Esophagus squamous epithelium (tissue), 5 donors: ENCODE measurements at regions of chr4 and their contacts with region 1.

Region 1: DNA sequence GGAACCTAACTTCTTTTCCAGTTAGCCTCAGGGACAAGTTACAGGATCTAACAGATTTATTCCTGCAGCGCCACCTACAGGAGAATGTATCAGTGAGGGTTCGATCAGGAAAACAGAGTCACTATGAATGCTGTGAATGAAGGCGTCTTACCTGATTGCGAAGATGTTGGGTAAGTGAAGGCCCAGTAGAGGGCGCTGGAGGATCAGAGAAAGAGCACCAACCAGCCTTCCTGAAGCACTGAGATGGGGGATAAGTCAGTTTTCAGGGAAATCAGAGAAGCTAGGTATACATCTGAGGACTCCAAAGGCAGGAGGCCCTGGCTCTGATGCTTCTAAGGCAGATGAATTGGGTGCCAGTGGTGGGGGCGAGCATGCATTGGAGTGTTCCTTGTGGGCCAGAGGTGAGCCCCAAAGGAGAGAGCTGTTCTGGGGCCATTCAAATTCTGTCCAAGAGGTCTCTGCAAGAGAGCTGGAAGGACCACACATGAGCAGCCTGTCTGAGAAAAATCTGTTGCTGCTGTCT is 169.9 kb upstream of the AADAT start:
- DNase-seq: no peak
- H3K4me3 ChIP-seq: no peak overlapping the region
- H3K27ac ChIP-seq: no peak overlapping the region
- H3K4me1 ChIP-seq: no peaks in the 10 kb centered on the region
- H3K27me3 ChIP-seq: no peaks in the 10 kb centered on the region
- CTCF ChIP-seq: peak; percentile 27 to 97 (median 88)
- POLR2A ChIP-seq: no peak

Region 2: DNA sequence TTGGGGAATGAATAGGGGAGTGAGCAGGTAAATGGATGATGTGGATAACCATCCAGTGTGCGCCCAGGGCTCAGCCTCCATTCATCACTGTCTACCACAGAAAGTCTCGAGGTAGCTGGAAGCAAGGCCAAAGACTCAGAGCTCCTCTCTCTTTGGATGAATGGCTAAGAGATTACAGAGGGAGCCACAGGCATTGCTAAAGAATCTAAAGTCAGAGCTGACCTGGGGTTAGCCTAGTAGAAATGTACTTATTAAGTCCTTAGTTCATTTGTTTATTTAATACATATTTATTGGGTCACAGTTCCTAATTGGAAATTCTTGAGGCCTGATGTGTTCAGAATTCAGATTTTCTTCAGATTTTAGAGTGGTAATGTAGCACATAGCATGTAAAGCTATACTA is 413.3 kb before region 1 on chr4:
- intact Hi-C with region 1: no loop called
- DNase-seq: no peak
- H3K4me3 ChIP-seq: no peak overlapping the region
- H3K27ac ChIP-seq: no peak overlapping the region
- H3K4me1 ChIP-seq: peaks cover 0 to 35% (median 6%) of the 10 kb centered on the region in 3 donors
- H3K27me3 ChIP-seq: no peaks in the 10 kb centered on the region
- CTCF ChIP-seq: no peak
- POLR2A ChIP-seq: no peak

Region 3: DNA sequence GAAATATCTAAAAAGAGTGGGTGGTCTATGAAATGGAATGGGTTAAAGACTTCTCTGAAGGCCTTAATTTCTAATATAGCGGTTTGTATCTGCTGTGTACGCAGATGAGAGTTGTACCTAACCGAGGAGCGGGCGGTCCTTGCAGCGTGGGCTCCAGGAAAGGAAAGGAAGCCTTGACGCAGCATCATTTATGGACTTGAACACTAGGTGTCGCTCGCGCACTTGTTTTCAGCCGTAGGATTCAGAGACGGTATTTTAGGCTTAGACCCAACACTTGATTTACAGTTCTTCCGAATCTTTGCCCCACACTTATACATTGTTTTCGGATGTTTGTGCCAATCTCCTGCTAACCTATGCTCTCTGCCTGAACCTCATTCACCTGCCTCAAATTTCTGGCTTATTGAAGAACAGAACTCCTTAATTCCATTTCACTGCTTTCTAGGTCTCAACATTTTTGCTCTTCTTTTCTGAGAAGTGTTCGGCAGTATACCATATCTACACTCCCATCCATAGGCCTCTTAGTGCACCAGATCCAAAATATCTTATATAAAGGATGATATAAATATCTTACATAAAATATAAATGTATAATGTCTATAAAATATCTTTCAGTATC is 121.0 kb before region 1 on chr4:
- intact Hi-C with region 1: loop called (anchors 10 kb)
- DNase-seq: no peak
- H3K4me3 ChIP-seq: no peak overlapping the region
- H3K27ac ChIP-seq: no peak overlapping the region
- H3K4me1 ChIP-seq: peaks cover 0 to 6% (median 0%) of the 10 kb centered on the region in 3 donors
- H3K27me3 ChIP-seq: no peaks in the 10 kb centered on the region
- CTCF ChIP-seq: peak; percentile 57 to 78 (median 64)
- POLR2A ChIP-seq: no peak